Naive thymus-derived CD4-positive, alpha-beta T cell (primary cell): ENCODE measurements at regions of chr2 and their contacts with region 1.

Region 1: DNA sequence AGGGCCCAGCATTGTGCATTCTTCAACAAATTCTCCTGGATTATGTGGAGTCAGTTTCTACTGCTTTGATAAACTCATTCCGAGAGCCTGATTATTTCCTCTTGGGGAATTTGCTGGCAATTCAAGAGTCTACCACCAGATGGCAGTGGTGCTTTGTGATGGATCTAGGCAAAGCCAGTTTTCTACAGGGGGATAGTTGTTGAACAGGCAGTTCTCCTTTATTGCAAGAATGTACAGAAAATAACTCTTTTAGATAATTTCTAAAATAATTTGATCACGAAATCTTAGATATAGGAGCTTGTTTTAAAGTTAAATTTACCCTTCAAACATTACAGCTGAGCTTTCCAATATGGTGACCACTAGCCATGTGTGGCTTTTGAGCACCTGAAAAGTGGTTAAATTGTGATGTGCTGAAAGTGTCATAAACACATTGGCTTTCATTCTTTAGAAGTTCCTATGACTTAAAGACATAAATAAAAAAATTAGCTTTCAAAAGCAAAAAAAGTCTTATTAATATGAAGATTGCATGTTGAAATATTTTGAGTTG is 66.7 kb upstream of the HAAO start:
- DNase-seq: peak; percentile 15 to 75 (median 58)
- ATAC-seq: peak; percentile 72
- H3K4me3 ChIP-seq: no peak overlapping the region
- H3K4me3 Mint-ChIP-seq: no peak overlapping the region
- H3K27ac ChIP-seq: no peak overlapping the region
- H3K27ac Mint-ChIP-seq: no peak overlapping the region
- H3K4me1 ChIP-seq: no peaks in the 10 kb centered on the region
- H3K4me1 Mint-ChIP-seq: peaks cover 0 to 4% (median 0%) of the 10 kb centered on the region in 7 donors
- H3K27me3 ChIP-seq: no peaks in the 10 kb centered on the region
- H3K27me3 Mint-ChIP-seq: peaks cover 0 to 3% (median 0%) of the 10 kb centered on the region in 5 donors

Region 2: GRCh38 chr2:42762823-42763804 is 96.0 kb before region 1 on chr2:
- CTCF ChIA-PET with region 1: interaction called, 13 read pairs
- POLR2A ChIA-PET with region 1: no interaction called
- intact Hi-C with region 1: no loop called
- DNase-seq: no peak
- ATAC-seq: no peak
- H3K4me3 ChIP-seq: no peak overlapping the region
- H3K4me3 Mint-ChIP-seq: peak overlapping the region in 1 of 10 donors; percentile 35
- H3K27ac ChIP-seq: no peak overlapping the region
- H3K27ac Mint-ChIP-seq: peak overlapping the region in 2 of 9 donors; percentile 8 to 30
- H3K4me1 ChIP-seq: no peaks in the 10 kb centered on the region
- H3K4me1 Mint-ChIP-seq: peaks cover 0 to 12% (median 0%) of the 10 kb centered on the region in 7 donors
- H3K27me3 ChIP-seq: no peaks in the 10 kb centered on the region
- H3K27me3 Mint-ChIP-seq: no peaks in the 10 kb centered on the region

Region 3: DNA sequence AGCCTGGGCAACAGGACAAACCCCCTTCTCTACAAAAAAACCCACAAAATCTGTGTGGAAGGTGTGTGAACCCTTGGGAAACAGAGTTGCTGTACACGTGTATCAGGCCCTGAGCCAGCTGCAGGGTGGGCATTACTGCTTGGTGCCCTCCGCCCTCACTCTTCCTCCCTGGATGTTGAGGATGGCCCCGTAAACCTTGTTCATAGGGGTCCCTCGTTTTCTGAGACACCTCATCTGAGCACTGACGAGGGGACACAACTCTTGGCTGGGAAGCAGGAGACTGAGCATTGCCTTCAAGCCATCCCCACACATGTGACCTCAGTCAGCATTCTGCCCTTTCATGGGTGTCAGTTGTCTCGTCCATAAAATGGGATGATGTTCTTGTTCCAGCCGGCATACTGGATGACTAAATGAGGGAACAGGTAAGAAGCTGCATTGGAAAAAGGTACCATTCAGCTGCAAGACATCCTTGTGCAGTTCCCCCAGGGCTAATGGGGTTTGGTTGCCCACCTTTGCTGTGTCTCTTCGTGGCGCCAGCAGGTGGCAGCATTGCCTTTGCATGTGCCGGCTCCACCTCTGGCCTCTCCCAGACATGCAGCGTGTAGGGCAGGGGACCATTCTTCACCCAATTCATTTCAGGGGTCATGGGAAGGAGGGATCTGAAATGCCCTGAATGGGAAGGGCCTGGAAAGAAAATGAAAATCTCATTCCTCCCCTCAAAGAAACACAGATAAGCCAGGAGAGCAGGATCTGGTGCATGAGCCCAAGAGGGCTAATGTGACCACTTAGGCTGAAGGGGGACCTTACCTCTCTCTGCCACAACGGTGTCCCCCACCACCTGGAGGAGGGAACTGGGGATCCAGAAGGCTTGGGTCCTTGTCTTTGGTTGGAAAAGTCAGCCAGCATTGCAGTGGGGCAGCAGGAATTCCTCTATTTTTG is 30.3 kb before region 1 on chr2:
- CTCF ChIA-PET with region 1: interaction called, 7 read pairs
- POLR2A ChIA-PET with region 1: no interaction called
- intact Hi-C with region 1: loop called in 1 of 2 experiments (anchors 2 kb)
- DNase-seq: peak; percentile 44 to 69 (median 63)
- ATAC-seq: peak; percentile 93
- H3K4me3 ChIP-seq: no peak overlapping the region
- H3K4me3 Mint-ChIP-seq: peak overlapping the region in 6 of 10 donors; percentile 18 to 47 (median 21)
- H3K27ac ChIP-seq: no peak overlapping the region
- H3K27ac Mint-ChIP-seq: peak overlapping the region in 2 of 9 donors; percentile 21 to 25
- H3K4me1 ChIP-seq: peaks cover 3 to 6% of the 10 kb centered on the region in 2 donors
- H3K4me1 Mint-ChIP-seq: peaks cover 7 to 19% (median 14%) of the 10 kb centered on the region in 7 donors
- H3K27me3 ChIP-seq: no peaks in the 10 kb centered on the region
- H3K27me3 Mint-ChIP-seq: peaks cover 0 to 8% (median 5%) of the 10 kb centered on the region in 5 donors

Region 4: DNA sequence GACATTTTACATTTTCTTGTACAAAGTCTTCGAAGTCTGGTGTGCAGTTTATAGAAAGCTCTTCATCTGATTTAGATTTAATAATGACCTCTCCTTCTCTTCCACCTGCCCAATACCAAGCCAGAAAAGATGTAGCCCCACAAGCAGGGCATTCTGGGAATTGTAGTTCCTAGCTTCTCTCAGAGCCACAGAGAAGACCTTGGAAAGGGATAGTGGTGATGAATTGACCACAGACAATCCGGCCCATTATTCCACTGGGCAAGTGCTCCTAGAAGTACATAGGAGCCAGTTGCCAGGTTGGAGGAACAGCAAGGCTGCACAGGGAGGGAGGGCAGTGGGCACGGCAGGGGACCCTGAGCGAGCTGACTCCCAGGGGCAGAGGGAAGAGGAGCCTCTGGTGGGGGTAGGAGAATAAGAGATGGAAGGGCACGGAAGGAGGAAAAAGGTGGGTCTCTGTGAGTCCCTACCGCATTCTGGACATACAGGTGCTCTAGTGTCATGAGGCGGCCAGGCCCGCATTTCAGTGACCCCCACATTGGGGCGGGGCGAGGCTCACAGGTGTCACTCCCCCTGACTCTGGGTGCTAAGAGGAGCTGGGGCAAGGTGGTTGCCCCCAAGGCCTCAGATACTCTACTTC is 85.8 kb after region 1 on chr2:
- CTCF ChIA-PET with region 1: interaction called, 4 read pairs
- POLR2A ChIA-PET with region 1: no interaction called
- intact Hi-C with region 1: loop called in 1 of 2 experiments (anchors 5 kb)
- DNase-seq: no peak
- ATAC-seq: no peak
- H3K4me3 ChIP-seq: no peak overlapping the region
- H3K4me3 Mint-ChIP-seq: no peak overlapping the region
- H3K27ac ChIP-seq: no peak overlapping the region
- H3K27ac Mint-ChIP-seq: no peak overlapping the region
- H3K4me1 ChIP-seq: no peaks in the 10 kb centered on the region
- H3K4me1 Mint-ChIP-seq: peaks cover 0 to 7% (median 5%) of the 10 kb centered on the region in 7 donors
- H3K27me3 ChIP-seq: no peaks in the 10 kb centered on the region
- H3K27me3 Mint-ChIP-seq: peaks cover 0 to 8% (median 0%) of the 10 kb centered on the region in 5 donors

Region 5: GRCh38 chr2:43542285-43542937 is 683.3 kb after region 1 on chr2:
- CTCF ChIA-PET with region 1: interaction called, 26 read pairs
- POLR2A ChIA-PET with region 1: no interaction called
- intact Hi-C with region 1: loop called in 1 of 2 experiments (anchors 2 kb)
- DNase-seq: peak in 7 of 9 donors; percentile 43 to 70 (median 48)
- ATAC-seq: peak; percentile 82
- H3K4me3 ChIP-seq: no peak overlapping the region
- H3K4me3 Mint-ChIP-seq: no peak overlapping the region
- H3K27ac ChIP-seq: no peak overlapping the region
- H3K27ac Mint-ChIP-seq: no peak overlapping the region
- H3K4me1 ChIP-seq: peaks cover 0 to 3% of the 10 kb centered on the region in 2 donors
- H3K4me1 Mint-ChIP-seq: peaks cover 9 to 18% (median 15%) of the 10 kb centered on the region in 7 donors
- H3K27me3 ChIP-seq: no peaks in the 10 kb centered on the region
- H3K27me3 Mint-ChIP-seq: no peaks in the 10 kb centered on the region

Region 6: DNA sequence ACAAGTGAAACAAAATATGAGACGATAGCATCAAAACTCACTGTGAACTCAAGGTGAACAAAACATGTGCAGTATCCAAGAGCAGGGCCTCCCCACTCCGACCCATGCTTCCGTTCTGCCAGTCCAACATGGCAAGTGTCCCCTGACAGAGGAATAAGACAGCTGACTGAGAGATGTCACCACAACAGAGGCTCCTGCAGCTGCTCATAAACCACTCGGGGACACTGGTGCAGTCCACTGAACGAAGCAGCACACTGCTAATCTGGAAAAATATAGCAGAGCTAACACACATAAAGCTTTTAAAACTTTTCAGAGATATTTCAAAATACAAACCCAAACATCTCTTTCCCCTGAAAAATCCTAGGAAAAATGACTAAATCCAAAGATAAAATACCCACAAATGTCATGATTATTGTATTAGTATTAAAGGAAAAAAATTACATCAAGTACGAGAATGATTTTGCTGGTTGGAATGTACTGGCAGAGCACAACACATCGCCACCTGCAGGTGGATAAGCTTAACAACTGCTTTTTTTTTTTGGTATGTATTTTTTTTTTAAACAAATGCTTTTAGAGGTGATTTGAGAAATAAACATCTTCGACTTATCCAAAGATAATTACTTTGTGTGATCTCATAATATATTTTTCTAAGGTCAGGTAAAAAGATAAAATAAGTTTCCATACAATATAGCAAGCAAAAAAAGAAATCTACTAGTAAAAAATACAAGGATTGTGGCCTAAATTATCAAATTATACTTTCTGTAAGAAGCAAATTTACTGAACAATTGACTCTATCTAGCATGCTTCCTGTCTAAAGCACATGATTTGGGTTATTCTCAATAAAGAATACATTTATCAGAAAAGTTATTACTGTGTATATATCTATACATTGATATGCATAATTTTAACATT is 718.2 kb after region 1 on chr2:
- CTCF ChIA-PET with region 1: interaction called, 6 read pairs
- POLR2A ChIA-PET with region 1: no interaction called
- intact Hi-C with region 1: loop called in 1 of 2 experiments (anchors 1 kb)
- DNase-seq: peak in 7 of 9 donors; percentile 15 to 54 (median 44)
- ATAC-seq: peak; percentile 70
- H3K4me3 ChIP-seq: no peak overlapping the region
- H3K4me3 Mint-ChIP-seq: no peak overlapping the region
- H3K27ac ChIP-seq: no peak overlapping the region
- H3K27ac Mint-ChIP-seq: no peak overlapping the region
- H3K4me1 ChIP-seq: no peaks in the 10 kb centered on the region
- H3K4me1 Mint-ChIP-seq: peaks cover 0 to 12% (median 6%) of the 10 kb centered on the region in 7 donors
- H3K27me3 ChIP-seq: no peaks in the 10 kb centered on the region
- H3K27me3 Mint-ChIP-seq: no peaks in the 10 kb centered on the region